ENCODE measurements at regions of chr20 and their contacts with region 1.

Region 1: DNA sequence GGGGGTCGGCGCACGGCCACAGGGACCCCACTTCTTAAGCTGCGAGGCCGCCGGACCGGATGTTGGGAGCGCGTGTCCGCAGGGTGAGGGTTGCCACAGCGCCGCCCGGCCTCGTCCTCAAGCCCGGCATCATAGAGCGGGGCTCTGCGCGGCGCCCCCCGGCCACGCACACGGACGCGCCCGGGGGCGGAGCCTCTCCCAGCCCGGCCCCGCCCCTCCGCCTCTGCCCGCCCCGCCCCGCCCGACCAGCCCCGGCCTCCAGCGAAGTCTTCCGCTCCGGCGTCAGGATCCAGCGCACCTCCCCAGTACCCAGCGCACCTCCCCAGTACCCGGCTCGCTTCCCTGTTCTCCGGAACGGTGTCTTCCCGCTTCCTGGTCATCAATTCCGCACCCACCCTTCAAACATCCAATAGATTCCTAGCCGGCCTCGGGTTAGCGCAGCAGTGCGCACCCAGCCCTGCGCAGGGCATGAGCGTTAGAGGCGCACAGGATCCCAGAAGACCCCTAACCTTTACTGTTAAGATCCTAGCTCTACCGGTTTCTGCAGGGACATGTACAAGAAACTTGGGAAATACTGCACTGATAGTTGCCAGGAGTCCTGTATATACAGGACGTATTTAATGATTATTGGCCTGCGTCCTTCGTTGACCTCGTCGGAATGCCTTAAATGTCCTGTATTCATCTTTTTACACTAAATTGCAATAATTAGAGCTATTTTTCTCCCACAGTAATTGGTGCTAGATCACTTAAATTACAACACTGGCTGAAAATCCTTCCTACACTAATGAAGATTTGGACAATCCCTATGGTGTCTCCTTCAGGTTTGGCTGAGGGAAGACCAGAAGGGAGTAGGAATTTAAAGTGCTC is 535 bp upstream of the DNAAF9 start:
- DNase-seq: peak; percentile 82 to 86 (median 83)
- ATAC-seq: peak; percentile 82 to 84 (median 82)
- H3K4me3 ChIP-seq: peak overlapping the region; percentile 66 to 100 (median 90)
- H3K27ac ChIP-seq: peak overlapping the region; percentile 89 to 98 (median 96)
- H3K4me1 ChIP-seq: peaks cover 0 to 31% (median 17%) of the 10 kb centered on the region in 12 donors
- H3K27me3 ChIP-seq: no peaks in the 10 kb centered on the region
- CTCF ChIP-seq: no peak
- POLR2A ChIP-seq: peak in 1 of 2 donors; percentile 69

Region 2: DNA sequence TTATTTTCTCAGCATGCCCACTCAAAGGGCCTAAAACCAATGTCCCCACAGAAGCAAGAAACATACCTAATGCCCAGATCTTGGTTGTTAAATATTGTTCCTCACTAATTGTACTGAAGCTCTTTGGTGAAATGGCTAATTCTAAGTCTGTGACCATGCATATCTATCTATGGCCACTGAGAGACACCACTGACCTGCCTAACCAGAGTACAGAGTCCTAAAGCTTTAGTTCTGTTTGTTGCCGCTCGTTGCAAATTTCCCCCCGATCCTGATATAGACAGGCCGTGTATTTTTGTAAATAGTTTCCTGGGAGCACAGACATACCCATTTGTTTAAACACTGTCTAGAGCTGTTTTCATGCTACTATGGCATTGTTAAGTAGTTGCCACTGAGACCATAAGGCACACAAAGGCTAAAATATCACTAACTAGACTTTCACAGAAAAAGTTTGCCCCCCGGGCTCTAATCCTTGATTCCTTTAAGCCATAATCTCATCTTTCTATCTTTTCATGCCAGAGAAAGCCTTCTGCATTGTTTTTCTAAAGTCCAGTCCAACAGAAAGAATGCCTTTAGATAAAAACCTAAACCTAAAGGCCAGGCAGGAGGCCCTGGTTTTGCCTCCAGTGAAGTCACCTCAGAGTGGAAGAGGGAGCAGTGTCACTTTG is 49.2 kb before region 1 on chr20:
- intact Hi-C with region 1: loop called in 4 of 10 experiments (anchors 10 kb)
- DNase-seq: no peak
- ATAC-seq: peak in 3 of 4 donors; percentile 37 to 72 (median 57)
- H3K4me3 ChIP-seq: no peak overlapping the region
- H3K27ac ChIP-seq: no peak overlapping the region
- H3K4me1 ChIP-seq: peaks cover 0 to 24% (median 10%) of the 10 kb centered on the region in 12 donors
- H3K27me3 ChIP-seq: no peaks in the 10 kb centered on the region
- CTCF ChIP-seq: peak in 1 of 12 donors; percentile 20
- POLR2A ChIP-seq: no peak

Region 3: GRCh38 chr20:3679749-3680700 is 272.0 kb after region 1 on chr20:
- intact Hi-C with region 1: no loop called
- DNase-seq: peak in 3 of 5 donors; percentile 67 to 71 (median 71)
- ATAC-seq: peak; percentile 13 to 68 (median 36)
- H3K4me3 ChIP-seq: peak overlapping the region in 9 of 12 donors; percentile 52 to 71 (median 58)
- H3K27ac ChIP-seq: peak overlapping the region in 10 of 12 donors; percentile 20 to 92 (median 66)
- H3K4me1 ChIP-seq: peaks cover 0 to 53% (median 24%) of the 10 kb centered on the region in 12 donors
- H3K27me3 ChIP-seq: peaks cover 0 to 42% (median 14%) of the 10 kb centered on the region in 9 donors
- CTCF ChIP-seq: no peak
- POLR2A ChIP-seq: no peak

Region 4: GRCh38 chr20:3811467-3812258 is 403.7 kb after region 1 on chr20:
- intact Hi-C with region 1: loop called in 1 of 10 experiments (anchors 10 kb)
- DNase-seq: peak; percentile 99
- ATAC-seq: peak; percentile 89 to 94 (median 92)
- H3K4me3 ChIP-seq: peak overlapping the region in 11 of 12 donors; percentile 4 to 62 (median 47)
- H3K27ac ChIP-seq: peak overlapping the region; percentile 76 to 96 (median 90)
- H3K4me1 ChIP-seq: peaks cover 14 to 75% (median 39%) of the 10 kb centered on the region in 12 donors
- H3K27me3 ChIP-seq: no peaks in the 10 kb centered on the region
- CTCF ChIP-seq: no peak
- POLR2A ChIP-seq: peak in 1 of 2 donors; percentile 75

Measured in heart left ventricle (tissue), 16 donors.